Sigmoid colon (tissue), 7 donors: ENCODE measurements at regions of chr10 and their contacts with region 1.

Region 1: GRCh38 chr10:32298054-32298812 is 48.7 kb downstream of the EPC1 start:
- DNase-seq: no peak
- H3K4me3 ChIP-seq: no peak overlapping the region
- H3K27ac ChIP-seq: no peak overlapping the region
- H3K4me1 ChIP-seq: peaks cover 0 to 37% (median 23%) of the 10 kb centered on the region in 4 donors
- H3K27me3 ChIP-seq: no peaks in the 10 kb centered on the region
- CTCF ChIP-seq: no peak
- EP300 ChIP-seq: no peak
- POLR2A ChIP-seq: no peak

Region 2: GRCh38 chr10:32253300-32253699 is 44.9 kb before region 1 on chr10:
- intact Hi-C with region 1: no loop called
- DNase-seq: no peak
- H3K4me3 ChIP-seq: no peak overlapping the region
- H3K27ac ChIP-seq: no peak overlapping the region
- H3K4me1 ChIP-seq: peaks cover 0 to 5% (median 2%) of the 10 kb centered on the region in 4 donors
- H3K27me3 ChIP-seq: no peaks in the 10 kb centered on the region
- CTCF ChIP-seq: no peak
- EP300 ChIP-seq: no peak
- POLR2A ChIP-seq: no peak

Region 3: GRCh38 chr10:32338262-32338661 is 40.0 kb after region 1 on chr10:
- intact Hi-C with region 1: loop called (anchors 5 kb)
- DNase-seq: no peak
- H3K4me3 ChIP-seq: no peak overlapping the region
- H3K27ac ChIP-seq: no peak overlapping the region
- H3K4me1 ChIP-seq: peaks cover 0 to 97% (median 90%) of the 10 kb centered on the region in 4 donors
- H3K27me3 ChIP-seq: no peaks in the 10 kb centered on the region
- CTCF ChIP-seq: no peak
- EP300 ChIP-seq: no peak
- POLR2A ChIP-seq: no peak

Region 4: DNA sequence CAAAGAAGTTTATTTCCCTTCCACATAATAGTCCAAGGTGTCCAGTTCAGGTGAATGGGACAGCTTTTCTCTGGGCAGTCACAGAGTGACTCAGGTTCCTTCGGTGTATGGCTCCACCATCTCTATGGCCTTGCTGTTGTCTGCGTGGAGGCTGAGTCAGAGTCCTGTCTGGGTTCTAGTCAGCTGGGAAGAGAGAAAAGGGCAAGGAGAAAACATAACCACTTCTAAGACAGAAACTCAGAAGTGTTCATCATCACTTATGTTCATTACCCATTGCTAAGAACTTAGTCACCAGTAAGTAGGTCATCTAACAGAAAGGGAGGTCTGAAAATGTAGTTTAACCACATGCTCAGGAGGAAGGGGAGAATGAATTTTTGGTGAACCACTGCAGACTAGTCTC is 115.3 kb after region 1 on chr10:
- intact Hi-C with region 1: no loop called
- DNase-seq: no peak
- H3K4me3 ChIP-seq: no peak overlapping the region
- H3K27ac ChIP-seq: peak overlapping the region; percentile 52 to 83 (median 65)
- H3K4me1 ChIP-seq: peaks cover 0 to 54% (median 44%) of the 10 kb centered on the region in 4 donors
- H3K27me3 ChIP-seq: no peaks in the 10 kb centered on the region
- CTCF ChIP-seq: no peak
- EP300 ChIP-seq: no peak
- POLR2A ChIP-seq: no peak